ENCODE measurements at regions of chr1 and their contacts with region 1.

Region 1: DNA sequence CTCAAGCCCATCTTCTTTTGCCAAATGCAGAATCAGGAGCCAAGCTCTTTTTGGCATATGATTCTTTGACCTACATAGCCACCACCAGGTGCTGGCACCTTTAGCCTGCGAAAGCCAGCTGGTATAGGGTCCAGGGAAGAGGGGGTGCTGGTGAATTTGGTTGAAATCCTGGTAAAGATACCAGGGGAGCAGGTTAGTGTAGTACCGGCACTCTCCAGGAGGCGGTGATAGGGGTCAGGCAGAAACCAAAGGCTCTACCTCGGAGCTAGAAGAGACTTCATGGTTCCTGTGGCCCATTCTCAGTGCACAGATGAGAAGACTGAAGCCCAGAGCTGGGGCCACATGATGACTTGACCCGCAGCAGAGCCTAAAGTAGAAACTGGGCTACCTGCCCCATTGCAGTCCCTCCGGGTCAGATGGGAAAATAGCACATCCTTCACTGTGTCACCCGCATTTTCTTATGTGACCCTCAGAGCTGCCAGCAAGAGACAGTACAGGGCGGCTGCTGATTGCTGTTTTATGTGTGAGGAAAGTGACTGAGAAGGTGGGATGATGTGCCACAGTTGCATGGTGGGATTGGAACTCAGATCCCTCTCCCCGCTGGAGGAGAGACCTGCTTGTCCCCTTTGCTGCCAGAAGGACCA is 36.0 kb upstream of the IL19 start:
- DNase-seq: peak; percentile 71 to 91 (median 82)
- ATAC-seq: peak; percentile 68
- H3K4me3 ChIP-seq: no peak overlapping the region
- H3K4me3 Mint-ChIP-seq: peak overlapping the region; percentile 6
- H3K27ac ChIP-seq: peak overlapping the region; percentile 19 to 37
- H3K27ac Mint-ChIP-seq: peak overlapping the region; percentile 90
- H3K4me1 ChIP-seq: peaks cover 57% of the 10 kb centered on the region
- H3K4me1 Mint-ChIP-seq: peaks cover 55% of the 10 kb centered on the region
- H3K27me3 ChIP-seq: no peaks in the 10 kb centered on the region
- H3K27me3 Mint-ChIP-seq: no peaks in the 10 kb centered on the region
- CTCF ChIP-seq: peak; percentile 95

Region 2: GRCh38 chr1:206716870-206717673 is 17.5 kb before region 1 on chr1:
- CTCF ChIA-PET with region 1: interaction called, 10 read pairs
- POLR2A ChIA-PET with region 1: interaction called, 3 read pairs
- intact Hi-C with region 1: no loop called
- DNase-seq: peak in 3 of 14 experiments; percentile 49 to 55 (median 53)
- ATAC-seq: peak; percentile 43
- H3K4me3 ChIP-seq: no peak overlapping the region
- H3K4me3 Mint-ChIP-seq: peak overlapping the region; percentile 8
- H3K27ac ChIP-seq: peak overlapping the region; percentile 1 to 61
- H3K27ac Mint-ChIP-seq: peak overlapping the region; percentile 83
- H3K4me1 ChIP-seq: peaks cover 70% of the 10 kb centered on the region
- H3K4me1 Mint-ChIP-seq: peaks cover 81% of the 10 kb centered on the region
- H3K27me3 ChIP-seq: no peaks in the 10 kb centered on the region
- H3K27me3 Mint-ChIP-seq: no peaks in the 10 kb centered on the region
- CTCF ChIP-seq: no peak

Region 3: GRCh38 chr1:206761159-206761768 is 26.6 kb after region 1 on chr1:
- CTCF ChIA-PET with region 1: interaction called, 57 read pairs
- POLR2A ChIA-PET with region 1: interaction called, 28 read pairs
- intact Hi-C with region 1: loop called (anchors 1 to 2 kb)
- DNase-seq: no peak
- ATAC-seq: no peak
- H3K4me3 ChIP-seq: no peak overlapping the region
- H3K4me3 Mint-ChIP-seq: no peak overlapping the region
- H3K27ac ChIP-seq: no peak overlapping the region
- H3K27ac Mint-ChIP-seq: no peak overlapping the region
- H3K4me1 ChIP-seq: peaks cover 34% of the 10 kb centered on the region
- H3K4me1 Mint-ChIP-seq: peaks cover 39% of the 10 kb centered on the region
- H3K27me3 ChIP-seq: no peaks in the 10 kb centered on the region
- H3K27me3 Mint-ChIP-seq: no peaks in the 10 kb centered on the region
- CTCF ChIP-seq: no peak

Region 4: GRCh38 chr1:206803221-206803730 is 68.7 kb after region 1 on chr1:
- CTCF ChIA-PET with region 1: interaction called, 139 read pairs
- POLR2A ChIA-PET with region 1: interaction called, 91 read pairs
- intact Hi-C with region 1: loop called (anchors 1 kb)
- DNase-seq: peak; percentile 61 to 97 (median 70)
- ATAC-seq: peak; percentile 89
- H3K4me3 ChIP-seq: no peak overlapping the region
- H3K4me3 Mint-ChIP-seq: peak overlapping the region; percentile 7
- H3K27ac ChIP-seq: peak overlapping the region; percentile 58 to 80
- H3K27ac Mint-ChIP-seq: peak overlapping the region; percentile 87
- H3K4me1 ChIP-seq: peaks cover 59% of the 10 kb centered on the region
- H3K4me1 Mint-ChIP-seq: peaks cover 73% of the 10 kb centered on the region
- H3K27me3 ChIP-seq: no peaks in the 10 kb centered on the region
- H3K27me3 Mint-ChIP-seq: no peaks in the 10 kb centered on the region
- CTCF ChIP-seq: no peak

Region 5: DNA sequence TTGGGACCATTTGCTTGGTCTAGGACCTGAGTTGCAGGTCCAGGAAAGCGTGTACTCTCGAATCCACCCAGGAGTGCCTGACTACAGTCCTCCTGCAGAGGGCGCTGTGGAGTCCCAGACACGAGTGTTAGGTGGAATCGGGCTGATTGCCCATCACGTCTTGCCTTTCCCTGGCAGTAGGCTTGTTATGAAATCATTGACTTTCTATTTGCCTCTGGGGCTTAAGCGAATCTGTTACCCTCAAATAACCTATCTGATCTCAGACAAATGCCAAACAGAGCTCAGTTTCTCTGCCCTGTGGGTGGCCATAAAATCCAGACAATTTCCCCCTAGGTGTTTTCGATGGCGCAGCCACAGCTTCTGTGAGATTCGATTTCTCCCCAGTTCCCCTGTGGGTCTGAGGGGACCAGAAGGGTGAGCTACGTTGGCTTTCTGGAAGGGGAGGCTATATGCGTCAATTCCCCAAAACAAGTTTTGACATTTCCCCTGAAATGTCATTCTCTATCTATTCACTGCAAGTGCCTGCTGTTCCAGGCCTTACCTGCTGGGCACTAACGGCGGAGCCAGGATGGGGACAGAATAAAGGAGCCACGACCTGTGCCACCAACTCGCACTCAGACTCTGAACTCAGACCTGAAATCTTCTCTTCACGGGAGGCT is 130.5 kb after region 1 on chr1 and contains the start of gene IL20:
- CTCF ChIA-PET with region 1: interaction called, 3 read pairs
- POLR2A ChIA-PET with region 1: no interaction called
- intact Hi-C with region 1: loop called (anchors 1 to 5 kb)
- DNase-seq: peak; percentile 79 to 93 (median 85)
- ATAC-seq: peak; percentile 98
- H3K4me3 ChIP-seq: no peak within 1 kb of the TSS
- H3K4me3 Mint-ChIP-seq: no peak within 1 kb of the TSS
- H3K27ac ChIP-seq: no peak within 1 kb of the TSS
- H3K27ac Mint-ChIP-seq: no peak within 1 kb of the TSS
- H3K4me1 ChIP-seq: peaks cover 5% of the 10 kb centered on the region
- H3K4me1 Mint-ChIP-seq: peaks cover 7% of the 10 kb centered on the region
- H3K27me3 ChIP-seq: peaks cover 0 to 2% of the 10 kb centered on the region in 2 experiments
- H3K27me3 Mint-ChIP-seq: peaks cover 12% of the 10 kb centered on the region
- CTCF ChIP-seq: peak; percentile 87
- total RNA-seq, gene IL20: not detected

Region 6: GRCh38 chr1:206935491-206936067 is 201.0 kb after region 1 on chr1:
- CTCF ChIA-PET with region 1: interaction called, 9 read pairs
- POLR2A ChIA-PET with region 1: no interaction called
- intact Hi-C with region 1: loop called in 1 of 2 experiments (anchors 5 kb)
- DNase-seq: peak in 8 of 14 experiments; percentile 20 to 71 (median 49)
- ATAC-seq: peak; percentile 55
- H3K4me3 ChIP-seq: no peak overlapping the region
- H3K4me3 Mint-ChIP-seq: no peak overlapping the region
- H3K27ac ChIP-seq: no peak overlapping the region
- H3K27ac Mint-ChIP-seq: no peak overlapping the region
- H3K4me1 ChIP-seq: peaks cover 24% of the 10 kb centered on the region
- H3K4me1 Mint-ChIP-seq: peaks cover 29% of the 10 kb centered on the region
- H3K27me3 ChIP-seq: no peaks in the 10 kb centered on the region
- H3K27me3 Mint-ChIP-seq: no peaks in the 10 kb centered on the region
- CTCF ChIP-seq: peak; percentile 60